Panc1 (cell line): ENCODE measurements at regions of chr19 and their contacts with region 1.

Region 1: GRCh38 chr19:4732680-4733114 is 9.1 kb upstream of the DPP9 start:
- DNase-seq: peak; percentile 35
- ATAC-seq: peak; percentile 91
- H3K4me3 ChIP-seq: peak overlapping the region in 1 of 2 experiments; percentile 23; a peak in 1 of 4 replicates
- H3K27ac ChIP-seq: no peak overlapping the region
- H3K4me1 ChIP-seq: no peaks in the 10 kb centered on the region
- H3K27me3 ChIP-seq: no peaks in the 10 kb centered on the region
- CTCF ChIP-seq: peak; percentile 87

Region 2: DNA sequence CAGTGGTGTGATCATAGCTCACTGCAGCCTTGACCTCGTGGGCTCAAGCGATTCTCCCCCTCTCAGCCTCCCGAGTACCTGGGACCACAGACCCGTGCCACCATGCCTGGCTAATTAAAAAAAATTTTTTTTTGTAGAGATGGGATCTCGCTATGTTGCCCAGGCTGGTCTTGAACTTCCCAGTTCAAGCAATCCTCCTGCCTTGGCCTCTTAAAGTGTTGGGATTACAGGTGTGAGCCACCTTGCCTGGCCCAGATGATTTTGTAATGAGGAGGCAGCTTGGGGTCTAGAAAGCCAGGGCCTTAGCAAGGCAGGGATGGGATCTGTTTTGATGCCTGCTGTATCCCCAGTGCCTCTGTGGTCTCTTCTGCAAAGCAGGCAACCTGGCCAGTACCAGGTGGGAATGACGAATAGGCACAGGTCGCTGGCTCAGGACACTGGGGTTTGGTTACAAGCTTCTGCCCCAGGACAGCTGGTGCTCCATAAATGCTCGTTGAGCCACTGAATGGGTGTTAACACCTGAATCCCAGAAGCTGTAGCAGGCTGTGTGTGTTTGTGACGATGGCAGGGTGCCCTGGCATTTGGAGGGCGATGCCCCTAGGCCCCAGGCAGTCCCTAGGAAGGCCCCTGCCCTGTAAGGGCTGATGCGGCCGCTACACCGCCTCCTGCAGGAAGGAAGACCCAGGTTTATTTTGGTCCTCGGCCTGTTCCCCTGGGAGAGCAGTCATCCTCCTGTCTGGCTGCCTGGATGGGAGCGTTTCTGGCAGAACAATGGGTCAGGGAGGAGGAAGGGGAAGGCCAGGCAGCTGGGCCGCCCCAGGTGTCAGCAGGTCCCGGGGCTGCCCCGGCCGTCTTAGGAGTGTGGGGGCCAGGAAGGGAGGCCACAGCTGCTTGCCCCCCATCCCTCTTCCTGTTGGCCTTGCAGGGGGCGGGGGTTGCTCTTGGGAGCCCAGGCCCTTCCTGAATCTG is 84.7 kb before region 1 on chr19:
- CTCF ChIA-PET with region 1: interaction called, 13 read pairs
- POLR2A ChIA-PET with region 1: no interaction called
- in situ Hi-C with region 1: no loop called
- intact Hi-C with region 1: no loop called
- DNase-seq: no peak
- ATAC-seq: no peak
- H3K4me3 ChIP-seq: no peak overlapping the region
- H3K27ac ChIP-seq: no peak overlapping the region
- H3K4me1 ChIP-seq: no peaks in the 10 kb centered on the region; the same call in 1 of the 2 replicates
- H3K27me3 ChIP-seq: no peaks in the 10 kb centered on the region
- CTCF ChIP-seq: no peak

Region 3: DNA sequence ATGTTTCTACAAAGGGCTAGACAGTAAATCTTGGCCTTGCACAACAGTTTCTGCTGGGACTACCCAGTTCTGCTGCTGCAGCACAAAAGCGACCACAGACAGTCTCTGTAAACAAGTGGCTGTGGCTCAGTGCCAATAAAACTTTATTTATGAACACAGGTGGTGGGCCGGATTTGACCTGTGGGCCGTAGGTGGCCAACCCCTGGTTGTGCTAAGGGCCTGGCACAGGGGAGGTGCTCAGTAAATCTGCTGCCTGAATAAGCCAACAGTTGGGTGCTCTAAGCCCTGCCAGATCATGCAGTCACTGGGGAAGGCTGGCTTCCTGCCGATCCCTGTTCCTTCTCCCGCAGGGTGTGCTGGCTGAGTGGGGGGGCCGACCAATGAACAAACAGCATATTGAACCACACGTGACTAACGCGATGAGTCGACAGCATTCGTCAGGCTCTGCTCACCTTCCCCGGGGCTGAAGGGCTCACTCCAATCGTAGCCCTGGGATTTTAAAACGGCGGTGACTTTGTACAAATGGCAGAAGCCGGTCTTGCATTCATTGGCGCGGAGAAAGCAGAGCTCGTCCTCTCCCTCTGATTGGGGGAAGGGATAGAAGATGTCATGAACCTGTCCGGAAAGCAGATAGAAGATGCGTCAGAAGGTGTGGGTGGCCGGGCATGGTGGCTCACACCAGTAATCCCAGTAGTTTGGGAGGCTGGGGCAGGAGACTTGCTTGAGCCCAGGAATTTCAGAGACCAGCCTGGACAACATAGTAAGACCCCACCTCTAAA is 38.3 kb before region 1 on chr19:
- CTCF ChIA-PET with region 1: no interaction called
- POLR2A ChIA-PET with region 1: no interaction called
- in situ Hi-C with region 1: no loop called
- intact Hi-C with region 1: no loop called
- DNase-seq: peak; percentile 88
- ATAC-seq: peak; percentile 82
- H3K4me3 ChIP-seq: no peak overlapping the region
- H3K27ac ChIP-seq: peak overlapping the region; percentile 39
- H3K4me1 ChIP-seq: peaks cover 3% of the 10 kb centered on the region; the same call in 1 of the 2 replicates
- H3K27me3 ChIP-seq: no peaks in the 10 kb centered on the region
- CTCF ChIP-seq: no peak

Region 4: GRCh38 chr19:4870025-4870700 is 137.5 kb after region 1 on chr19:
- CTCF ChIA-PET with region 1: no interaction called
- POLR2A ChIA-PET with region 1: no interaction called
- in situ Hi-C with region 1: no loop called
- intact Hi-C with region 1: no loop called
- DNase-seq: peak; percentile 92
- ATAC-seq: peak; percentile 86
- H3K4me3 ChIP-seq: no peak overlapping the region
- H3K27ac ChIP-seq: peak overlapping the region; percentile 74
- H3K4me1 ChIP-seq: peaks cover 14% of the 10 kb centered on the region
- H3K27me3 ChIP-seq: no peaks in the 10 kb centered on the region
- CTCF ChIP-seq: no peak